ENCODE measurements at regions of chr11 and their contacts with region 1.

Region 1: GRCh38 chr11:124837491-124837856 is 27.8 kb upstream of the ROBO3 start:
- DNase-seq: peak; percentile 71
- H3K4me3 ChIP-seq: no peak overlapping the region
- H3K27ac ChIP-seq: no peak overlapping the region
- H3K4me1 ChIP-seq: peaks cover 14% of the 10 kb centered on the region
- H3K27me3 ChIP-seq: peaks cover 52% of the 10 kb centered on the region
- CTCF ChIP-seq: peak; percentile 77 to 80

Region 2: GRCh38 chr11:124402326-124402922 is 435.1 kb before region 1 on chr11:
- CTCF ChIA-PET with region 1: no interaction called
- dilution Hi-C with region 1: no loop called
- in situ Hi-C with region 1: loop called in 1 of 2 experiments (anchors 25 kb)
- intact Hi-C with region 1: loop called (anchors 2 kb)
- DNase-seq: peak; percentile 64
- H3K4me3 ChIP-seq: no peak overlapping the region
- H3K27ac ChIP-seq: no peak overlapping the region
- H3K4me1 ChIP-seq: no peaks in the 10 kb centered on the region
- H3K27me3 ChIP-seq: peaks cover 3% of the 10 kb centered on the region
- CTCF ChIP-seq: peak; percentile 83 to 90

Region 3: DNA sequence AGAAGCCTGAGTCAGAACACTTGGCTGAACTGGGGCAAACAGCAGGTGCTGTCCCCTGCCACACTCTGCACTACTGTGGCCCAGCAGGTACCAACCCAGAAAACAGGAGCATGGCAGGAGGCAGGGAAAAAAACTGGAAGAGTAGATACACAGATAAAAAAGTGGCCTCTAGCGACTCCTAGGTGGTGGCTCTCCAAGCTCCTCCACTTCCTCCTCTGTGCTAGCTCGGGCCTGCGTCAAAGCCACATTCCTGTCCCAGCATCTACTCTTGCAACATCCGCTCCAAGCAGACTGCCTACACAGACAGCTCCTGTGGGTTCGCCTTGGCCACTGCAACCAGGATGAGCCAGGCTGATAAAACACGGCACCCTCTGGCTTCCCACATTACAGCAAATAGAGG is 301.0 kb before region 1 on chr11:
- CTCF ChIA-PET with region 1: no interaction called
- dilution Hi-C with region 1: no loop called
- in situ Hi-C with region 1: no loop called
- intact Hi-C with region 1: no loop called
- DNase-seq: peak; percentile 55
- H3K4me3 ChIP-seq: no peak overlapping the region
- H3K27ac ChIP-seq: no peak overlapping the region
- H3K4me1 ChIP-seq: peaks cover 14% of the 10 kb centered on the region
- H3K27me3 ChIP-seq: no peaks in the 10 kb centered on the region
- CTCF ChIP-seq: peak in 1 of 2 donors; percentile 20

Region 4: DNA sequence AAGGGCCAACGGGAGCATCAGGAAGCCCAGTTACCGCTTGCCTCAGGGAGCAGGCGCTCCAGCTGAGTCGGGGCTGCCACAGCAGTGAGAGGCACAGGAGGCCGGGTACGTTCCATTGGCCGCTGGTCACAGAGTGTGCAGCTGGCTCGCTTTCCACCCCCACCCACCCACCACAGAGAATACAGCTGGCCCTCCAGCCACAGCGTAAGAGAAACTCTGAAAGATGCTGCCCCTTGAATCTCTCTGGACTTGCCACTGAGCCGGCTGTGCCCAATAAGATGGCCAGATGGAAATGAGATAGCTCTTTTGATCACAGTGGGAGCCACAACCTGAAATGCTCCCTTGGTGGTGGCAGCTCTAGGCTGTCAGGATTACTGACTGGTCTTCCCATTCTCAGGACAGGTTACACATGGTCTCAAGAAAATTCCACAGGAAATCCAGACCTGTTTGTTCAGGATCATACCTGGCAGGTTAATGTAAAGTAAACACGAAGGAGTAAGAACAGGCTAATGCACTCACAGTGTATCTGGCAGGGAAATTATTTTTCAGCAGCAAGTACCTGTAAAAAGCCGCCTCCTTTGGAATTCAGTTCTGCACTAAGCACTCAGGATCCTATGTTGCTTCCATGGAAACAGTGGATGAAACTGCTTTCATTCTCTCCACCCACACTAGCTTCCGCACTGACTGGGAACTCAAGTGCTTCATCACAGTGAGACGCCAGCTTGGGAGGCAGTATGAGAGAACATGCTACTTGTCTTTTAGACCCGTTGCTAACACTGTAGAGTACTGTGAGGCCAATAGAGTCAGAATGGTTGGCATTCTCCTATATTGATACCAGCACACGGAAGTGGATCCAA is 180.5 kb before region 1 on chr11:
- CTCF ChIA-PET with region 1: no interaction called
- dilution Hi-C with region 1: loop called (anchors 5 kb)
- in situ Hi-C with region 1: loop called (anchors 10 kb)
- intact Hi-C with region 1: no loop called
- DNase-seq: peak; percentile 66
- H3K4me3 ChIP-seq: no peak overlapping the region
- H3K27ac ChIP-seq: peak overlapping the region; percentile 38
- H3K4me1 ChIP-seq: peaks cover 13% of the 10 kb centered on the region
- H3K27me3 ChIP-seq: no peaks in the 10 kb centered on the region
- CTCF ChIP-seq: no peak

Region 5: DNA sequence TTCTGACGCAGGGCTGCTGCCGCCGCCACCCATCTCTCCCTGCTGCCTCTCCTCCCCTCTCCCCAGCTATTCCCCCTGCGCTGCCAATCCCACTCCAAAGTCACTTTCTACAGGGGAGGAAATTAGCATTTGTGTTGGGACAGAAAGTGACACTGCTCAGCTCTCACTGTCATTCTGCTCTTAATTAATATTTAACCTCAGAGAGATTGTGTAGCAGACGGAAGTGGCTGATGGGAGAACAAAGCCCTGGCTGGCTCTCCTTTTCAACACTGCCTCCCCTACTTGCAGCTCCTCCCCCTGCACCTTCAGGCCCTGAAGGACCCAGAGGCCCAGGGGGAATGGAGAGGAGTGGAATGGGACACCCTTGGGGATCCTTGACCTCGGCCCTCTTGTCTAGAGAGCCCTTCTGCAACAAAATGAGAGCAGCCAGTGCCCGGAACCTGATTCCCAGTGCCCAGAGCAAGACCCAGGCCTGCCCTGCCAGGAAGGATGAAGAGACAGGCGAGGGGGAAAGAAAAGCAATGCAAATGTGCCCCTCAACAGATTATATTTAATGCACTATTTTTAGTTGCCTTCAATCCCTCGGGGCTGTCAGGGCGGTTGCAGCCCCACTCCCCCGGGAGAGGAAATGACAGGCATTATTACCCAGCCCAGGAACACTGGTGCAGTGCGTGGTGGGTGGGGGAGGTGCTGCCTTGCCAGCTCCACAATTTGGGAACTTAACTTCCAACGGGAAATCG is 112.3 kb before region 1 on chr11:
- CTCF ChIA-PET with region 1: no interaction called
- dilution Hi-C with region 1: no loop called
- in situ Hi-C with region 1: no loop called
- intact Hi-C with region 1: no loop called
- DNase-seq: no peak
- H3K4me3 ChIP-seq: no peak overlapping the region
- H3K27ac ChIP-seq: no peak overlapping the region
- H3K4me1 ChIP-seq: peaks cover 12% of the 10 kb centered on the region
- H3K27me3 ChIP-seq: peaks cover 14% of the 10 kb centered on the region
- CTCF ChIP-seq: no peak

Region 6: DNA sequence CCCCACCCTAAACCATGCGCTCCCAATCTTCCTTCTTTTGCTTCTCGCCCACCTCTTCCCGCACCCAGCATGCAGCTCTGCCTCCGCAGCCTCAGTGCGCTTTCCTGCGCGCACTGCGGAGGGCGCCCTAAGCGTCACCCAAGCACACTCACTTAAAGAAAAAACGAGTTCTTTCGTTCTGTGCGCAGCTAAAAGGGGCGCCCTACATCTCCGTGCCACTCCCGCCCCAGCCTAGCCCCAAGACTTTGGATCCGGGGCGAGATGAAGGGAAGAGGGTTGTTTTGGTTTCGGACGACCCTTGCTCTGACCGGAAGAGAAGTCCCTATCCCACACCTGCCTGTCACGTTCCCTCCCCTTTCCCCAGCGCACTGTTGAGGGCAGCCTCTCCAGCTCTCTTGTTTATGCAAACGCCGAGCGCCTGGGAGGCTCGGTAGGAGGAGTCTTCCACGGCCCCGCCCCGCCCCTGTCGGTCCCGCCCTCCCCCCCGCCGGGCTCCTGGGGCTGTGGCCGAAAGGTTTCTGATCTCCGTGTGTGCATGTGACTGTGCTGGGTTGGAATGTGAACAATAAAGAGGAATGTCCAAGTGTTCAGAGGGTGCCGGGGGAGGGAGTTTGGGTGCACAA is 90.7 kb before region 1 on chr11:
- CTCF ChIA-PET with region 1: no interaction called
- dilution Hi-C with region 1: no loop called
- in situ Hi-C with region 1: no loop called
- intact Hi-C with region 1: loop called (anchors 5 kb)
- DNase-seq: peak; percentile 69
- H3K4me3 ChIP-seq: peak overlapping the region in 2 of 3 experiments; percentile 47 to 51
- H3K27ac ChIP-seq: no peak overlapping the region
- H3K4me1 ChIP-seq: peaks cover 8% of the 10 kb centered on the region
- H3K27me3 ChIP-seq: peaks cover 4% of the 10 kb centered on the region
- CTCF ChIP-seq: peak; percentile 14 to 46

Region 7: DNA sequence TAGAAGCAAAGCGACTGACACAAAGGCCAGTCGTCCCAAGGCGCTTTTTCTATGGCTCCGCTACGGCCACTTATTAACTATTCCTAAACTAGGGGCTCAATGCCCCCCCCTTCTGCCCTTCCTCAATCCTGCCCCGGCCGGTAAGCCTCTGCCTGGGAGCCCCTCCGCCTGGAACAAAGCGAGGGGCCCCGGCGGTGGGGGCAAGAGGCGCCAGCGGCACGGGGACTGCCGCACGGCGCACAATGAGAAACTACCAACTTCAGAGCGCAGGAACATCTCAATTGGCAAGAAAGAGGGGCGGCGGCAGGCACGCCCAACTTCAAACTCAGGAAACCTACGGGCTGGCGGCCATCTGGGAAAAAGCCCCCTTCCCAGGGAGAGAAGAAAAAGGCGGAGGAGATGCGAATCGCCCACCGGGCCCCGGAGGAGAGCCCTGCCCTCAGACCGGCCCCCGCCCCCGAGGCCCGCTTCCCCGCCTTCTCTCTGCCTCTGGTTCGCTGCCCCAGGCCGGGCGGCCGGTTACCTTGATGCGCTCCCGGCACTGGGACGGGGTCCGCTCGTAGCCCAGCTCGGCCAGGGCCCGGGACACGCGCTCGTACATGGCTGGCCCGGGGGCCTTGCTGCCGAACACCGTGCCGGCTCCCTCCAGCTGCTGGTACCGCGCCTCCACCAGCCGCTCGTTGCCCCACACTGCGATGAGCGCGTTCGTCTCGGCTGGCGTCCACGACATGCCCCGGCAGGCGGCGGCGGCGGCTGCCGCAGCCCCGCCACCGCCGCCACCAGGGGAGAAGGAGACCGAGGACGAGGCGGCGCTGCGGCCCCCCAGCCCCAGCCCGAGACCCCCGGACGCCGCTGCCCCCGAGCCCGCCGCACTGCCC is 37.9 kb before region 1 on chr11:
- CTCF ChIA-PET with region 1: no interaction called
- dilution Hi-C with region 1: no loop called
- in situ Hi-C with region 1: no loop called
- intact Hi-C with region 1: loop called (anchors 1 kb)
- DNase-seq: peak; percentile 42
- H3K4me3 ChIP-seq: peak overlapping the region; percentile 86 to 94 (median 89)
- H3K27ac ChIP-seq: peak overlapping the region; percentile 56
- H3K4me1 ChIP-seq: peaks cover 16% of the 10 kb centered on the region
- H3K27me3 ChIP-seq: no peaks in the 10 kb centered on the region
- CTCF ChIP-seq: no peak

Region 8: DNA sequence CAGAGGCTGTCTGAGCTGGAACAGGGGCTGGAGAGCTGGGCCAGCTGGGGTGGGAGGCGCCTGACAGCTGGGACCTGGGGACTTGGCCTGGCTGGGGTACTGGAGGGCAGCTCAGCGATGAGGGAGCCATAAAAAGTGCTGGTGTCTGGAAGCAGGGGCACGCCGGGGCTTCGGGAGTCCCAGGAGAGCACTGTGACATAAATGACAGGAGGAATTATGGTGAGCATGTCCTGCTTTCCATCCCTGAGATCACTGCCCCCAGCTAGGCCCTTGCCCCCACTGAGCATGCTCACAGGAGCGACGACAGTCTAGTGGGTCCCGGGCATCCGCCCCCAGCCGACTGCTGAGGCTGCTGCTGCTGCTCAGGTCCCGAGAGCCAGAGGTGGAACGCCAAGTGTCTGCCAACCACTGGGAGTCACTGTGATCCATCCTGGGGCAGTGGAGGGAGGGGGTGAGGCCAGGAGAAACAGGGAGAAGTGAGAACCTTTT is 53.9 kb after region 1 on chr11:
- CTCF ChIA-PET with region 1: no interaction called
- dilution Hi-C with region 1: loop called (anchors 5 kb)
- in situ Hi-C with region 1: no loop called
- intact Hi-C with region 1: no loop called
- DNase-seq: no peak
- H3K4me3 ChIP-seq: no peak overlapping the region
- H3K27ac ChIP-seq: no peak overlapping the region
- H3K4me1 ChIP-seq: peaks cover 10% of the 10 kb centered on the region
- H3K27me3 ChIP-seq: no peaks in the 10 kb centered on the region
- CTCF ChIP-seq: peak in 1 of 2 donors; percentile 27

Region 9: DNA sequence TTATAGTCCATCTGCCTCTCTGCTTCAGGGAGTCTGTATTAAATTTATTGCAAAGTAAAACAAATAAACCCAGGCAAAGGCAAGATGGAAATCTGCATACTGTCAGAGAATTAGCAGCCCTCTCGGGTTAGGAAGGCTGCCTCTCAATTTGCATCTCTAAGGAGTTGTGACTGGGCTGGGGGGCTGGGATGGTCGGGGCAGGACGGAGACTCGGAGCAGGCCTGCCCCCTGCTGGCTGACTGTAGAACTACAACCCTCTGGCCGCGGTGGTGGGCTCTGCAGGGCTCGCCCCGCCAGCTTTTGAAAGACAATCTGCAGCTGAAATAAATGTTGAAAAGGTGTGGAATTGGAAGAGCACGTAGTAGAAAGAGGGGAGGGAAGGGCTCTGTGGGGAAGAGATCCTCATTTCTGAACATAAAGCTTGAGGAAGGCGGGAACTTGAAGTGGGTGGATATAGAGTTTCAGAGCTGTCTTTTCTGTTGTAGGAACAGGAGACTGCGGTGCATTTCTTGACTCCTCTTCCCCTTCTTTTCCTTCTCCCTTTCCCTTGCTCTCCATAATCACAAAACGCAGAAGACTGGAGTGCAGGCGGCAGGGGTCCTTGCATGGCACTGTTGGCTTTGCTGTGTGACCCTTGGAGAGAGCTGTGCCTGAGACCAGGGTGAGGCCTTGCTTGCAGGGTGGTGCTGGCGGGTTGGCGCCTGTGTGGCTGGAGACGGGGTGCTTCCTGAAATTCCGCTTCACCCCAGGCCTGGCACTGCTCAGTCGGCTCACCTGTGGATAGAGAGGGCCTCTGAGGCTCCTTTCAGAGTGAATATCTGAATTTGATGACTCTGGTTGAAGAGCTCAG is 304.4 kb after region 1 on chr11:
- CTCF ChIA-PET with region 1: no interaction called
- dilution Hi-C with region 1: no loop called
- in situ Hi-C with region 1: no loop called
- intact Hi-C with region 1: loop called (anchors 1 kb)
- DNase-seq: no peak
- H3K4me3 ChIP-seq: no peak overlapping the region
- H3K27ac ChIP-seq: no peak overlapping the region
- H3K4me1 ChIP-seq: no peaks in the 10 kb centered on the region
- H3K27me3 ChIP-seq: no peaks in the 10 kb centered on the region
- CTCF ChIP-seq: peak; percentile 81 to 97

Measured in mammary epithelial cell (primary cell).